ENCODE measurements at regions of chr2 and their contacts with region 1.

Region 1: GRCh38 chr2:157898591-157898996 is 22.5 kb upstream of the ACVR1 start:
- DNase-seq: peak; percentile 85
- H3K4me3 Mint-ChIP-seq: peak overlapping the region; percentile 82
- H3K27ac Mint-ChIP-seq: peak overlapping the region; percentile 99
- H3K4me1 Mint-ChIP-seq: peaks cover 75% of the 10 kb centered on the region
- H3K27me3 Mint-ChIP-seq: no peaks in the 10 kb centered on the region

Region 2: DNA sequence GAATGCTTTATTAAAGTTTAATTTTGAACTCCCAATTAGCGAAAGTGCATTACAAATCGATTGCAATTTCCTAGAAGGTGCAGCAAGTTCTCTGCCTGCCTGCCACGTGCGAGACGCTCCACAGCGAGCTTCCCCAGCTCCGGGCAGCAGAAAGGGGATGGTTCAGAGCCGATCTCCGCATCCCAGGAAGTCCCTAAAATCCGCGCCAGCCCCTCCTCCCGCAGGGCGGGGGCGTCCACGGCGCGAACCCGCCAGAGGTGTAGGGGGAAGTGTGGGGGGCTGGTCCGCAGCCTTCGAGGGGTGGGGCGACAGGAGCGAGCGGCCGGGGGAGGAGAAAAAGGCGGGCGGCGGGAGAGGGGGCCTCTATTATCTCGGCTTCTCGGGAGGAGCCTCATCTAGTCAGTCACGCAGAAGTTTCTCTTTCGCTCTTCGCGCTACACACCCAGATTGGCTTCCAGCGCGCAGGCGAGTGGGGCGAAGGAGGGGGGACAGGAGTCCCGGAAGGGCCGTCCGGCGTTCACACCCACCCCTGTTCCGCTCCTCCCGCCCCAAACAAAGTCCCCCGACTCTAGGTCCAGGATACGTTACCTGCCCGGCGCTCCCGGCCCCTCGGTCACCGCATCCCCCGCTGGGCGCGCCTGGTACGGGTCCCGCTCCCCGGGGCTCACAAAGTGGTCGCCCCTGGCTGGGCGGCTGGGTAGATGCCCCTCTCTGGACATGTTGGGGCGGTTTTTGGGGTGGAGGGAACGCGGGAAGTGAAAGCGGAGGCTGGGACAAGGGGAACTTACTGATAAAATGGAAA is 1556.9 kb before region 1 on chr2:
- intact Hi-C with region 1: loop called (anchors 2 kb)
- DNase-seq: peak; percentile 96
- H3K4me3 Mint-ChIP-seq: peak overlapping the region; percentile 93
- H3K27ac Mint-ChIP-seq: peak overlapping the region; percentile 99
- H3K4me1 Mint-ChIP-seq: peaks cover 48% of the 10 kb centered on the region
- H3K27me3 Mint-ChIP-seq: no peaks in the 10 kb centered on the region

Region 3: GRCh38 chr2:157413326-157414035 is 485.1 kb before region 1 on chr2:
- intact Hi-C with region 1: loop called (anchors 2 kb)
- DNase-seq: peak; percentile 88
- H3K4me3 Mint-ChIP-seq: peak overlapping the region; percentile 87
- H3K27ac Mint-ChIP-seq: peak overlapping the region; percentile 95
- H3K4me1 Mint-ChIP-seq: peaks cover 71% of the 10 kb centered on the region
- H3K27me3 Mint-ChIP-seq: no peaks in the 10 kb centered on the region

Region 4: DNA sequence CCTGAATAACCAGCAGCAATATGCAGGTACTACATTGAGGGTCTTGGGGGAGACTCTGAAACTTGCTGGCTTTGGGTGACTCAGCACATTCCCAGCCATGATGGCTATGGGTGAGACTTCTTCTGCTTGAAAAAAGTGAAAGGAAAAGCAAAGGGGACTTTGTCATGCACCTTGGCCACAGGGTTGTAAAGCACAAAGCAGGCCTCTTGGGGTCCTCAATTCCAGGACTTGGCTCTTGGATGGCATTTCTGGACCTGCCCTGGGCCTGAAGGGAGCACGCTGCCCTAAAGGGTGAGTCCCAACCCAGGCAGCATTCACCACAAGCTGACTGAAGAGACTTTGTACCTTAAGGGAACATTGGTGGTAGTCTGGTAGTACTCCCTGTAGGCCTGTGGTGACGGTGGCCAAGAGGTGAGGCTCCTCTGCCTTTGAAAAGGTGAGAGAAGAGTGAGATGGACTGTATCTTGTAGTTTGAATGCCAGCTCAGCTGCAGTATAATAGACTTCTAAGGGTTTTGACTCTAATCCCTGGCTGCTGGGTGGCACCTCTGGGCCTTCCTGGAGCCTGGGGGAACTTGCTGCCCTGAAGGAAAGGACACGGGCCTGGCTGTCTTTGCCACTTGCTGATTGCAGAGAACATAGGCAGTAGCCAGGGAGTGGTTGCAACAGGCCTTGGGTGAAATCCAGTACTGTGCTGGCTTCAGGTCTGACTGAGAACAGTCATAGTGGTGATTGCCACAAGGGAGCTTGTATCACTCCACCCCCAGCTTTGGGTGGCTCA is 418.2 kb before region 1 on chr2:
- intact Hi-C with region 1: loop called (anchors 2 kb)
- DNase-seq: peak; percentile 88
- H3K4me3 Mint-ChIP-seq: peak overlapping the region; percentile 84
- H3K27ac Mint-ChIP-seq: peak overlapping the region; percentile 96
- H3K4me1 Mint-ChIP-seq: peaks cover 77% of the 10 kb centered on the region
- H3K27me3 Mint-ChIP-seq: no peaks in the 10 kb centered on the region

Region 5: DNA sequence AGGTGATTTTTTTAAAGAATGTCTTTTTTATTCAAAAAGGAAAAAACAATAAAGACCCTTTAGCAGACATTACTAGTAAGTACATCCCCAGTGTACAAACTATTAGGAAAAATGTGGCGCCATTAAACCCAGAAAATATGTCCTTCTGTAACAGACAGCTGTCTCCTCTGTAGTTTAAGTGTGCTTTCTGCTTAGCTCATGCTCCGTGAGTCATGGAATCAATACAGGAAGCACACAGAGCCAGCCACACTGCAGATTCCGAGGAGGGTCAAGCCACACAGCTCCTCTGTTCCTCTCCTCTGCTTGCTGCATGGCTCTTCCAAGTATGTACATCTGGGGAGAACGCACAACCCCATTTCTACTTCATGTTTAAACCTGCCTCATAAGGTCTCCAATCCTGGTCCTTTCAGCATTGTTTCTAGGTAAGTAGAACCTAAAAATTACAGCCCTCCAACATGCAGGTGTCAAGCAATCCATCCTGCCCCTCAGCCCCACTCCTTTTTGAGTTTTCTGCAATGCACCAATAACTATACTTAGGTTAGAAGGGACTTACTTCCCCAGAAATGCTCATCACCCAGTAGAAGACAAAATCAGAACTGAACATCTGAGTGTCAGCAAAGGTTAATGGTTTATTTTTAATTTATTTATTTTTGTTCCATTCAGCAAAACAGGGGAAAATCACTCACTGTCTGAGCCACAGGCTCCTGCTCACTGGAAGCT is 60.0 kb before region 1 on chr2:
- intact Hi-C with region 1: loop called (anchors 2 kb)
- DNase-seq: peak; percentile 72
- H3K4me3 Mint-ChIP-seq: peak overlapping the region; percentile 61
- H3K27ac Mint-ChIP-seq: peak overlapping the region; percentile 83
- H3K4me1 Mint-ChIP-seq: peaks cover 49% of the 10 kb centered on the region
- H3K27me3 Mint-ChIP-seq: no peaks in the 10 kb centered on the region

Region 6: GRCh38 chr2:158006961-158007719 is 108.5 kb after region 1 on chr2:
- intact Hi-C with region 1: loop called (anchors 2 kb)
- DNase-seq: peak; percentile 63
- H3K4me3 Mint-ChIP-seq: no peak overlapping the region
- H3K27ac Mint-ChIP-seq: no peak overlapping the region
- H3K4me1 Mint-ChIP-seq: peaks cover 18% of the 10 kb centered on the region
- H3K27me3 Mint-ChIP-seq: peaks cover 3% of the 10 kb centered on the region

Measured in activated CD4-positive, alpha-beta T cell treated with anti-CD3 and anti-CD28 coated beads, Interleukin-2, amount 10 ng/mL, durations not matched to agents 24 days and 14 days (primary cell).